GM18951 (cell line): ENCODE measurements at regions of chr5 and their contacts with region 1.

Region 1: DNA sequence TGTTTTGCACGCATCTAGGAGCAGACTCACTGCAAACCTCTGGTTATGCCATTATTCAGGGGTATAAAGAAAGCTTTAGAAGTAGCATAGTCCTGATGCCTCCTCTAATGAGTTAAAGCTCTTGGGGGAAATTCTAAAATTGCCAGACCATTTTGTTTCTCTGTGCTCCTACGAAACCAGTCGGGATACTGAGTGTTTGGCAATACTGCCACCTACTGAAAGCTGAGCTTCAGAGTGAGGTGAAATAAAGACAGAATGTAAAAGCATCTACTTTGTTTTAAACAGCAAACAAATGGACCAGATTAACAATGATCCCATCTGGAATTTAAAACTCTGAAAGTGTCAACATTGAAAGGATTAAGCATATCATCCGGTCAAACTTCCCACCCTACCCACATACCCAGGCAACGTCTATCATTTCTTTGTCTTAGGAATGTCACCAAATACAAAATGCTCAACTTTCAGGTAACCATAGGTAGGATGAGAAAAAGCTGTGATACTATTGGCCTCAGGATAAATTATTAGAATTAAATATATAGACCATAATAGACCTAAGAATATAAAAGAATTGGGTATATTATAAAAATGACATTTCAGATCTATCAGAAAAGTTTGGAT is 77.8 kb upstream of the SHISAL2B start:
- POLR2A ChIP-seq: no peak

Region 2: GRCh38 chr5:64147849-64148441 is 464.5 kb before region 1 on chr5:
- in situ Hi-C with region 1: loop called (anchors 25 kb)
- POLR2A ChIP-seq: no peak

Region 3: DNA sequence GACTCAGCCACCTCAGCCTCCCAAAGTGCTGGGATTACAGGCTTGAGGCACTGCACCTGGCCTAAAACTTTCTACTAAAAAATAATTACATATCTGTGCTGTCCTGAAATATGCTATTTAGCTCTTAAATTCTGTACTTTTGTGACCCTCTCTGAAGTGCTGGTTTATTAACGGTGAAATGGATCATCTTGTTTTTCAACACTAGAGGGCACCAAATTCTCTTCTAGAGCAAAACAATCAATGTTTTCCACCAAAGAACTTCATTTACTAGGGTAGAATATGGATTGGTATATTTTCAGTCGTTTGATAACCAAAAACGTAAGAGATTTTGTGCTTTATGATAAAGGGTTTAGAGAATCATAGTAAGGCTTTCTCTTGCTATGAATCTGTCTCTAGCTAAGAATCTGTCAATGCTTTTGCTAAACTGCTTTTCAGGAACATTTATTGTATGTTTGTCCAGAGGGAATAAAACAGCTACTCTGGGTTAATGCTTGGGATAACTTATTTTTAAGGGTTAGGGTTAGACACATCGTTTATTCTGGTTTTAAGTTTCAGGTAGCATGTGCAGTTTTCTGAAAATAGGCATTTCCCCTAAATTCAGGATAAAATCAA is 383.2 kb before region 1 on chr5:
- in situ Hi-C with region 1: loop called (anchors 25 kb)
- POLR2A ChIP-seq: no peak

Region 4: GRCh38 chr5:64437496-64437895 is 175.0 kb before region 1 on chr5:
- in situ Hi-C with region 1: no loop called
- POLR2A ChIP-seq: no peak

Region 5: GRCh38 chr5:64557911-64558310 is 54.5 kb before region 1 on chr5:
- in situ Hi-C with region 1: no loop called
- POLR2A ChIP-seq: no peak

Region 6: DNA sequence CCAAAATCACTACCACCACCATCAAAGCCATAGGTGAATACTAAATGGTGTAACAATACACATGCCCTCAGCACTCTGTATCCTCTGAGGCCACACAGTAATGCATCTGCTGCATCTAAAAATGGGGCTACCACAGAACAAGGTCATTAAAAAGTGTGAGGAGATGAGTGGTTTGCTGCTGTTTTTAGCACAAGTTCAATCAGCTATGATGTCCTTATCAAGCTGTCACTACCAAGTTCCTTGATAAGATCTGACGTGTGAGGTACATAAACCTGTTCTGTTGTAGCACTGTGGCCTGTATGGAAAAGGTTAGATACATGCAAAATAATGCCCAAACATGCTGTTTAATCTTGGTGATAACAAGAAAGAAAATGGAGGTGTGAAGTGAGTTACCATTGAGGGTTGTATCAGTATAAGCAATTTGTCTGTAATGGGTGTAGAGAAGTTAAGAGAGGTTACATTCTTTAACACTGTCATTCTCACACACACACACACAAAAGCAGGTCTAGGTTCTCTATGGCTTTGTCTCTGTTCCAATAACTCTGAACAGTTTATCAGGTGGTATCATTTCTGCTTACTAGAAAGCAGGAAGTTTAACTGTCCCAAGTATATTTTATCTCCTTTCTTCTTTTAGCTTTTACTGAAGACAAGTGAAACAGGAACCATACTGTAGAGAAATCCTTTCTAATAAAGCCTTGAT is 409.2 kb after region 1 on chr5:
- in situ Hi-C with region 1: no loop called
- POLR2A ChIP-seq: no peak